Ovary (tissue), 10 donors: ENCODE measurements at regions of chr20 and their contacts with region 1.

Region 1: DNA sequence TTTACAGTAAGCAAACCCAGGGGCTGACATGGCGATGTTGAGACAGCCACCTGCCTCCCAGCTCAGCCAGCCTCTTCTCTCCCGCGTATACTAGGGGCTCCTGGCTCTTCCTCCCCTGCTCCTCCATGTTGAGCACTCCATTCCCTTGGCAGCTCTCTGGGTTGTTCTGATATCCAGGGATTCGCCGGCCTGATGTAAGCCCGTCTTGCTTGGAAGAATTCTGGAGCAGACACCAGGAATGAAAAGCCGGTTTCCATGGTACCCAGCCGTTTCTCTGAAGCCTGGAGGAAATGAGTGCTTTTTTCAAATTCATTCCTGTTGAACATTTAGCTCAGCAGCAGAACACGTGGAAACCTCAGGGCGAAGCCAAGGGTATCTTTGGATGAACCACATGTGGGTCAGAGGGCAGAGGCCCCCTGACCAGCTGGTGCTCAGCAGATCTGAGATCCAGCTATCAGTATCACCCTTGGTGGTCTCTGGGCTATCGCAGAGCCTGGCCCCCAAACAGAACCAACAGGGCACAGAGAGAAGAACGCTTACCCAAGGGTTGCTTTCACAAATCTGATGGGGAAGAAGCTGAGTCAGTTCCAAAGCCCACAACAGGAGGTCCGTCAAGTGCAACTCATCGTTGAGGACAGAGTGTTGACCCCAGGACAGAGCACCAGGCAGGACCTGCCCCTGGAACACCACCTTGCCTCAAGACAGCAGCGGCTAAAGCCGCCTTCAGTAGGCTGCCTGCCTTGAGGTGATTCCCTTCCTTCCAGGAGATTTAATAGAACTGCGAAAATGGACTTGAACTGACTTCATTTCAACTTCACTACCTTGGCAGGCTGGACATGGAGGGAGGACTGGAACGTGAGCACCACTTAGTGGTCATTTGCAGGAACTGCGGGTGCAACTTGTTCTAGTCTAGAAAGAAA is 96.1 kb upstream of the RIN2 start:
- DNase-seq: peak; percentile 50 to 80 (median 74)
- H3K4me3 ChIP-seq: no peak overlapping the region
- H3K27ac ChIP-seq: peak overlapping the region in 1 of 2 donors; percentile 3
- H3K4me1 ChIP-seq: peaks cover 2% of the 10 kb centered on the region
- H3K27me3 ChIP-seq: no peaks in the 10 kb centered on the region
- CTCF ChIP-seq: peak; percentile 84 to 96 (median 94)
- EP300 ChIP-seq: no peak
- POLR2A ChIP-seq: peak; percentile 7

Region 2: DNA sequence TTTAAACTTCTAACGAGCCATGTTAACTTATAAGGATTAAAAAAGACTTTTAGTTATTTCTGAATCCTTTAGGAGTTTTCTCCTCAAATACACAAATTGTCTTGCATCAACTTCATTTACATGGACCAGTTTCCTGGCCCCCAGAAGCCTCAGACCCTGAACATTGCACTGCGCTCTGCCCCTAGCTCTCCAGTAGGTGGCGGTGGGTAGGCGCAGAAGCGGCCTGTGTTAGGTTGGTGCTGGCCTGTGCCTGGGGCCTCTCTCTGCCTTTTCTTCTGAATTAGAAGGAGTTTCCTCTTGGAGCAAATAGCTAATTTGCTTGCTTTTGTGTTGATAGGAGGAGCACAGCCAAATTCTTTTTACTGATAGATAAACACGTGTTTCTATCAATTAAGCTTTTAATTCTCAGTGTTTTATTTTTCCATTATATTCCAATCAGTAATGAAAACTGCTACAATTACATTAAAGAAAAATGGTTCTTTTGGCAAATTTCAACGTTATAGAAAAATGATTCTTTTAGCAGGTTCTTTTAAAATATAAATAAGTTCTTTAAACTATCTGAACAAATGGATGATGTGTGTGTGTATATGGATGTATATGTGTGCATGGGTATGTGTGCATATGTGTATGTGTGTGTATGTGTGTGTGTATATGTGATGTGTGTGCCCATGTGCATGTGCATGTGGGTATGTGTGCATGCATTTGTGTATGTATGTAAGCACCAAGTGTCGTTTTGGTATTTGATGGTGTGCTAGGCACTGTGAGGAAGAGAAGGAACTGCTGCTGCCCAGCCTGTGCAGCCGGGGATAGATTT is 1029.6 kb before region 1 on chr20:
- intact Hi-C with region 1: loop called in 2 of 4 experiments (anchors 10 kb)
- DNase-seq: peak; percentile 59 to 80 (median 70)
- H3K4me3 ChIP-seq: no peak overlapping the region
- H3K27ac ChIP-seq: no peak overlapping the region
- H3K4me1 ChIP-seq: no peaks in the 10 kb centered on the region
- H3K27me3 ChIP-seq: no peaks in the 10 kb centered on the region
- CTCF ChIP-seq: peak; percentile 50 to 67 (median 61)
- EP300 ChIP-seq: no peak
- POLR2A ChIP-seq: no peak

Region 3: GRCh38 chr20:18904624-18905023 is 757.4 kb before region 1 on chr20:
- intact Hi-C with region 1: loop called in 1 of 4 experiments (anchors 5 kb)
- DNase-seq: peak in 4 of 5 donors; percentile 14 to 39 (median 28)
- H3K4me3 ChIP-seq: no peak overlapping the region
- H3K27ac ChIP-seq: no peak overlapping the region
- H3K4me1 ChIP-seq: peaks cover 1% of the 10 kb centered on the region
- H3K27me3 ChIP-seq: no peaks in the 10 kb centered on the region
- CTCF ChIP-seq: no peak
- EP300 ChIP-seq: no peak
- POLR2A ChIP-seq: no peak

Region 4: GRCh38 chr20:19205977-19206396 is 456.0 kb before region 1 on chr20:
- intact Hi-C with region 1: loop called in 3 of 4 experiments (anchors 5 to 10 kb)
- DNase-seq: peak; percentile 67 to 85 (median 83)
- H3K4me3 ChIP-seq: no peak overlapping the region
- H3K27ac ChIP-seq: no peak overlapping the region
- H3K4me1 ChIP-seq: peaks cover 2% of the 10 kb centered on the region
- H3K27me3 ChIP-seq: no peaks in the 10 kb centered on the region
- CTCF ChIP-seq: peak; percentile 77 to 86 (median 84)
- EP300 ChIP-seq: no peak
- POLR2A ChIP-seq: no peak

Region 5: DNA sequence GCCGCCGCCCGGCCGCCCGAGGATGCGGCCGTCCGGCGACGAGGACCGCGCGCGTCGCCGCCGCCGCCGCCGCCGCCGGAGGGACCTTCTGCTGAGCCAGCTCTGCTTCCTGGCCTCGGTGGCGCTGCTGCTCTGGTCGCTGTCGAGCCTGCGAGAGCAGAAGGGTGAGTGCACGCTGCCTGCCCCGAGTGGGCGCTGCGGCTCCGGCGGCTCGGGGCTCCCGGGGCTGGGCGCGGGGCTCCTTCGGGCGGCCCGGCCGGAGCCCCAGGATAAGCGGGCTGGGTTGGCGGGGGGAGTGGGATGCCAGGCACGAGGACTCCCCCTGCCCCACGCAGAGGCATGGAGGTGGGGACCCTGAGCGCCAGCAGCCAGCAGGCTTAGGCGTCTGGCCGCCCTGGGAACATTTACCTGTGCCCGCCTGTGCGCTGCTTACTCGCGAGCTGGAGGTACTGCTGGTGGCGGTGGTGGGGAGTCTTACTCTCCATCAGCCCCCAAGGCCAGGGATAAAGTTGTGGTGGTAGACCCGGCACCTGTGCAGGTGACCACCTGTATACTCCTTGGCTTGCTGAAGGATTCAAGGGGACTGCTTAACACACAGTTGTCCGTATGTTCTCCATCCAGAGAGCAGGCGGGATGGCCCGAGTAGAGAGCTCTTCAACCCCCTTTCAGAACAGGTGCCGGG is 449.0 kb before region 1 on chr20:
- intact Hi-C with region 1: loop called (anchors 2 to 10 kb)
- DNase-seq: peak; percentile 82 to 86 (median 85)
- H3K4me3 ChIP-seq: peak overlapping the region; percentile 78
- H3K27ac ChIP-seq: peak overlapping the region; percentile 75 to 85
- H3K4me1 ChIP-seq: peaks cover 8% of the 10 kb centered on the region
- H3K27me3 ChIP-seq: no peaks in the 10 kb centered on the region
- CTCF ChIP-seq: peak; percentile 23 to 75 (median 74)
- EP300 ChIP-seq: no peak
- POLR2A ChIP-seq: no peak

Region 6: DNA sequence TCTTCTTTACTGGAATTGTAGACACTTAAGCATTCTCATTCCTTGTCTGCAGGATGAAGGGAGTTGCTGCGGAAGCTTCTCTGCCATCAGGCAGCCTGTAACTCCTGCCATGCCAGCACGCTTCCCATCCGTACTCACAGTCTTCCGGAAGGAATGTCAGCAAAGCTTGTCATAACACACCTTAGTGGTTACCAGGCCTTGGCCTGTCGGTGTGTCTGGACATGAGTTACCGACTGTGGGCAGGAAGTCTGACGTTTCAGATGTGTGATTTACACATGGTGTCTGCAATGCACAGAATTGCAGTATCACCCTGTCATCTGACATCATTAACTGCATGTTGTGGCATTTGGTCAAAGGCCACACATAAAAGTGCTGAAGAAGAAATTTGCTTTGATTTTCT is 347.4 kb before region 1 on chr20:
- intact Hi-C with region 1: no loop called
- DNase-seq: no peak
- H3K4me3 ChIP-seq: no peak overlapping the region
- H3K27ac ChIP-seq: no peak overlapping the region
- H3K4me1 ChIP-seq: peaks cover 4% of the 10 kb centered on the region
- H3K27me3 ChIP-seq: no peaks in the 10 kb centered on the region
- CTCF ChIP-seq: no peak
- EP300 ChIP-seq: no peak
- POLR2A ChIP-seq: no peak

Region 7: DNA sequence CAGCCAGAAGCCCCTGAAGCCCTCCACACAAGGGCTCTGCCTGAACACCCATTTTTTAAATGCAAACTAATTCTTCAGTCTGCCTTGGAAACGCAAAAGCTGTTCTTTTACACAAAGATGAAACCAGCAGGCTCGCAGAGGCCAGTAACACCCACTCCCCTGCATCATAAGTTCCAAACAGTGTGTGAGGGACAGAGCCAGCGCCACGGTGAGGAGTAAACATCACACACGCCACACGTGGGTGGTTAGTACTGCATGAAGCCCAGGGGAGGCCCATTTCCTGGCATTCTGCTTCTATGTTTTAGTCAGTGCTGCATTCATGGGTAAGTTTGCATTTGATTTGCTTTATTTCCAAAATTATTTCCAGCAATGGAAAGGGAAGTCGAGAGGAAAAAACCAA is 121.6 kb before region 1 on chr20:
- intact Hi-C with region 1: no loop called
- DNase-seq: peak; percentile 42 to 65 (median 47)
- H3K4me3 ChIP-seq: no peak overlapping the region
- H3K27ac ChIP-seq: peak overlapping the region in 1 of 2 donors; percentile 45
- H3K4me1 ChIP-seq: peaks cover 17% of the 10 kb centered on the region
- H3K27me3 ChIP-seq: no peaks in the 10 kb centered on the region
- CTCF ChIP-seq: no peak
- EP300 ChIP-seq: no peak
- POLR2A ChIP-seq: no peak

Region 8: DNA sequence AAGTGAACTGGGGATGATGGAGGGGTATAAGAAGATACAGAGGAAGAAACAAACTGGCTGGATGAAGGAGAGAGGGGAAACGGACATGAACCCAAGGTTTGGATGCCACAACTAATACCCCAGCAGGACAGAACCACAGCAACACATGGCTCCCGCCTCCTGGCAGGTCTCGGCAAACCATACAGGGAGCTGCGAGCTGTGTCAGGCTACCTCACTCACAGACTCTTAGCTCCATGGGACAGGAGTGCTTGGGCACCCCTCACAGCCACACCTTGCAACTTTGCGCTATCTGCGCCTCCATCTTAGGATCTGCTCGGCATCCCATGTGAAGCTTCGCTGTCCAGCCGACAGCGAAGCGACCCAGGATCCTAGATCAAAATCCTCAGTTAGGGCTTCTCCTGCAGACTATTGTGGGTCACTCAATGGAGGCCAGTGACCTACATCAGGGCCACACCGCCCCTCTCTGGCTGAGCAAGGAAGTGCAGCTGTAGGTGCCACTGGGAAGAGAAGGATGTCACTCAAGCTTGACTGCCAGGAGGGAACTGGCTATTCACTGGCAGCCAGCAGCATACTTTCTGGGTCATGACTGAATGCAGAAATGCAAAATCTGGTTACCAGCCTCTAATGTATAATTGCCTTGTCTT is 78.3 kb before region 1 on chr20:
- intact Hi-C with region 1: loop called in 1 of 4 experiments (anchors 2 kb)
- DNase-seq: peak; percentile 52 to 81 (median 74)
- H3K4me3 ChIP-seq: no peak overlapping the region
- H3K27ac ChIP-seq: no peak overlapping the region
- H3K4me1 ChIP-seq: no peaks in the 10 kb centered on the region
- H3K27me3 ChIP-seq: no peaks in the 10 kb centered on the region
- CTCF ChIP-seq: peak; percentile 52 to 75 (median 65)
- EP300 ChIP-seq: no peak
- POLR2A ChIP-seq: no peak

Region 9: GRCh38 chr20:19589787-19590362 is 72.1 kb before region 1 on chr20:
- intact Hi-C with region 1: loop called in 1 of 4 experiments (anchors 2 kb)
- DNase-seq: no peak
- H3K4me3 ChIP-seq: no peak overlapping the region
- H3K27ac ChIP-seq: no peak overlapping the region
- H3K4me1 ChIP-seq: peaks cover 5% of the 10 kb centered on the region
- H3K27me3 ChIP-seq: no peaks in the 10 kb centered on the region
- CTCF ChIP-seq: no peak
- EP300 ChIP-seq: no peak
- POLR2A ChIP-seq: no peak